Activated CD4-positive, alpha-beta T cell treated with anti-CD3 and anti-CD28 coated beads, Interleukin-2, amount 10 ng/mL, durations not matched to agents 24 days and 14 days (primary cell): ENCODE measurements at regions of chr5 and their contacts with region 1.

Region 1: DNA sequence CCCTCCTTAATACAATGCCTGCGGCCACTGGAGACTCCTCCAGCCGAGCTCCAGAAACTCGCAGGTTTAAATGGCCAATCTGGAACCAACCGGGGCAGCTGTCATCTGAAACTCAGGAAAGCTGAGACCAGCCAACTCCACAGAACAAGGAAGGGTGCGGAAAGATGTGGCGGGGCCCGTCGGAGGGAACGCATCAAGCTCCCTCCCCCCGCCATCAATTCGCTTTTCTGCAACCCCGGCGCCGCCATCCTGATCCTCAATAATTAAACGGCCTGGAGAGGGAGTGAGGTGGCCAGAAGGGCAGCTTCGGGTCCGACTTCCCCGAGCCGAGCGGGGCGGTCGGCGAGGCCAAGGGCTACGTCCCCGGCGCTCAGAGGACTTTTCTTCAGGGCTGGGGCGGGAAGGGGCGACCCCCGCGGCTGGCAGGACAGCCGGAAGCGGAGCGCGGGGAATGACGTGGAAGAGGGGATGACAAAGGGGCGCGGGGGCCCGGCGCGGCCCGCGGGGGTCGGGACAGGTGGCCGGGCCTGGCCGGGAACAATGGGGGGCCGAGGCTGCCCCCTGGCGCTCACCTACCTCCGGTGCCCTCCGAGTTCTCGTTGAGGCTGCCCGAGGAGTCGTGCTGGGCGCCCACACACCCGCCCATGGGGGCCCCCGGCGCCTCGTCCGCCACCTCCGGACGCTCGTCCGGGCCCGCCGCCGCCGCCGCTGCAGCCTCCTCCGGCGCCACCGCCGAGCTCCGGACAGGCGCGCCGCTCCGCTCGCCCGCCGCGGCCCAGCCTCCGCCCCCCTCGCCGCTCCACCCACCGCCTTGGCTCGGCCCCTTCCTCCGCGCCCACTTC is at the start of gene UBTD2:
- DNase-seq: peak; percentile 95
- H3K4me3 Mint-ChIP-seq: peak within 1 kb of the TSS; percentile 89
- H3K27ac Mint-ChIP-seq: peak within 1 kb of the TSS; percentile 81
- H3K4me1 Mint-ChIP-seq: peaks cover 23% of the 10 kb centered on the region
- H3K27me3 Mint-ChIP-seq: peaks cover 25% of the 10 kb centered on the region
- total RNA-seq, gene UBTD2: 5.5 and 6.3 TPM in 2 replicates

Region 2: GRCh38 chr5:172114875-172115422 is 168.3 kb before region 1 on chr5:
- intact Hi-C with region 1: loop called (anchors 2 kb)
- DNase-seq: peak; percentile 90
- H3K4me3 Mint-ChIP-seq: peak overlapping the region; percentile 81
- H3K27ac Mint-ChIP-seq: peak overlapping the region; percentile 97
- H3K4me1 Mint-ChIP-seq: peaks cover 61% of the 10 kb centered on the region
- H3K27me3 Mint-ChIP-seq: no peaks in the 10 kb centered on the region

Region 3: DNA sequence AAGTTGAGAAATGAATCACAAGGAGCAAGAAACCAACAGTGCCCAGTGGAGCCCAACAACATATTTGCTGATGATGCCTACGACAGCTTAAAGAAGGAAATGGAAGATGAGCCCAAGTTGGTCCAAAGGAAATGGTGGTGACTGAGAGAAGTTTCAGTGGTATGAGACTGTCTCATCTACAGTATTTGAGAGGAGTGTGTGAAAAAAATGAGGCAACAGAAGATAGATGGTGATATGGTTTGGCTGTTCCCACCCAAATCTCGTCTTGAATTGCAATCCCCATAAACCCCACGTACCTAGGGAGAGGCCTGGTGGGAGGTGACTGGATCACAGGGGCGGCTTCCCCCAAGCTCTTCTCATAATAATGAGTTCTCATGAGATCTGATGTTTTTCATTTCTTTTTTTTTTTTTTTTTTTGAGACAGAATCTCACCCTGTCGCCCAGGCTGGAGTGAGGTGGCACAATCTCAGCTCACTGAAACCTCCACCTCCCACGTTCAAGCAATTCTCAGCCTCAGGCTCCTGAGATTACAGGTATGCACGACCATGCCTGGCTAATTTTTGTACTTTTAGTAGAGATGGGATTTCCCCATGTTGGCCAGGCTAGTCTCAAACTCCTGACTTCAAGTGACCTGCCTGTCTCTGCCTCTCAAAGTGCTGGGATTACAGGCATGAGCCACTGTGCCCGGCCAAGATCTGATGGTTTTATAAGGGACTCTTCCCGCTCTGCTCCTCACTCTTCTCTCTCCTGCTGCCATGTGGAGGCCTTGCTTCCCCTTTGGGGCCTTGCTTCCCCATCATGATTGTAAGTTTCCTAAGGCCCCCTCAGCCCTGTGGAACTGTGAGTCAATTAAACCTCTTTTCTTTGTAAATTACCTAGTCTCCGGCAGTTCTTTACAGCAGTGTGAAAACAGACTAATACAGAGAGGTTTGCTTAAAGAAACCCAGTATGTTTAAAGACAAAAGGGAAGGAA is 59.1 kb before region 1 on chr5:
- intact Hi-C with region 1: loop called (anchors 2 kb)
- DNase-seq: peak; percentile 69
- H3K4me3 Mint-ChIP-seq: peak overlapping the region; percentile 17
- H3K27ac Mint-ChIP-seq: peak overlapping the region; percentile 73
- H3K4me1 Mint-ChIP-seq: peaks cover 22% of the 10 kb centered on the region
- H3K27me3 Mint-ChIP-seq: peaks cover 7% of the 10 kb centered on the region